ENCODE measurements at regions of chr3 and their contacts with region 1.

Region 1: DNA sequence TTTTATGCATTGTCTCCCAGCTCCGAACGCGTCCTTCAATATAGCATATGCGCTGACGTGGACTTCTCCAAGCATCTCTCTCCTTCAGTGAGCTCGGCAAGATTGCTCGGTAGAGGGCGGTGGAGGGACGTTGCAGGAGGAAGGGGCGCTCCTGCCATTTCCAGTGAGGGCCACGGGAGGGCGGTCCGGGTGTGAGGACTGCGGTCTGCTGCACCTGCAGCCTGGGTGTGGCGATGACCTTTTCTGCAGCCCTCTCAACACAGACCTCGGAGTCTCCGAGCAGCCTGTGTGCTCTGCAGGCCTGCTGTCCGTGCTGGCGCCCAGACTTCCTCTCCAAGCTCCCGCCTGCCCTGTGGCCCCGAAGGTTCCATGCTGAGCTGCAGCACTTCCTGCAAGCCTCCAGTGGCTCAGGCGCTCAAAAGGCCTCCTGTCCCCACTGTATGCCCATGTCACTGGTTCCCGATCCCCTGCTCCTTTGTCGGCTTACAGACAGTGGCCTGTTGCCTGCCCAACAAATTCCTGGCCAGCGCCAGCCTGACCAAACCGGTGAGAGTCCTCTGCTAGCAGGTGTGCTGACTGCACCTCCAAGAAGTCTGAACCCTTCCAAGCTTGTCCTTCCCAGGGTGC is 8.9 kb upstream of the RTP3 start:
- DNase-seq: peak; percentile 96
- ATAC-seq: peak; percentile 99
- H3K4me3 Mint-ChIP-seq: peak overlapping the region; percentile 47
- H3K27ac Mint-ChIP-seq: peak overlapping the region; percentile 17
- H3K4me1 Mint-ChIP-seq: peaks cover 30% of the 10 kb centered on the region
- H3K27me3 Mint-ChIP-seq: peaks cover 12% of the 10 kb centered on the region

Region 2: DNA sequence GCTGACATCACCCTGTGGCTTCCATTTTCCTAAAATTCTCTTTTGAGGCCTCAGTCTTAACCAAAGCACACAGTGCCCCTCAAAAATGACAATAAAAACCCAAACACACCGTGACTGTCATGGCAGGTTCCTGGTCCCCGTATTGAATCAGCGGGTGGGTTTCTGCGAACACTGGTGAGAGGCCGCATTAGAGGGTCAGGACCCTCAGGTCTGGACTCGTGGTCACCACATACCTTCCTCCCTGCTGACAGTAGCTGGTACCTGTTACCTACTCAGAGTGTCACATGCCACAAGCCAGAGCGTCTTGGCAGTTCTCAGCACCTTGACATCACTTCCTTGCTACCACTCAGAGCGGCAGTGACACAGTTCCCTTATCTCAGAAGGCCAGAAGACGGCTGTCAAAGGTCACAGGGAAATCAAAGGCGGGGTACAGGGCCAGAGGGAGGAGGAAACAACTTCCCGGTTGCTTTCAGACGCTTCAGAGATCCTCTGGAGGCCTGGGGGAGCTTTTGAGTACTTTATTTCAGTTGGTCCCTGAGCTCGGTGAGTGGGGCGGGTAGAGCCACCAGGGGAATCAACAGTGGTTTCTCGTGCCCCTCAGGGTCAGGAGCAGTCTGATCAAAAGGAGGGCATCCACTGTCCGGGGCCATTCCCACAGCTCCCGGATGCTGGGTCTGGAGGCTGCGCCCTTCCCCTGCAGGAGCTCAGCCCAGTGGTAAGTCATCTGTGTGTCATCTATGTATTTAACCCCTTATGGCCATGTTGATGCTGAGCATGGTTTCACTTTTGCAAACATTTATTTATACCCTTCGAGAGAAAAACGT is 81.8 kb before region 1 on chr3 and contains the starts of genes CCR5AS and CCRL2:
- CTCF ChIA-PET with region 1: interaction called, 17 read pairs
- POLR2A ChIA-PET with region 1: no interaction called
- DNase-seq: peak; percentile 79
- ATAC-seq: peak; percentile 87
- H3K4me3 Mint-ChIP-seq: peak within 1 kb of the TSS; percentile 87
- H3K27ac Mint-ChIP-seq: peak within 1 kb of the TSS; percentile 93
- H3K4me1 Mint-ChIP-seq: peaks cover 41% of the 10 kb centered on the region
- H3K27me3 Mint-ChIP-seq: peaks cover 10% of the 10 kb centered on the region
- total RNA-seq, gene CCRL2: 10.1 to 11.2 TPM

Region 3: GRCh38 chr3:46469680-46470357 is 19.0 kb before region 1 on chr3:
- CTCF ChIA-PET with region 1: interaction called, 69 read pairs
- POLR2A ChIA-PET with region 1: no interaction called
- DNase-seq: no peak
- ATAC-seq: no peak
- H3K4me3 Mint-ChIP-seq: no peak overlapping the region
- H3K27ac Mint-ChIP-seq: no peak overlapping the region
- H3K4me1 Mint-ChIP-seq: peaks cover 2% of the 10 kb centered on the region
- H3K27me3 Mint-ChIP-seq: peaks cover 44% of the 10 kb centered on the region

Region 4: DNA sequence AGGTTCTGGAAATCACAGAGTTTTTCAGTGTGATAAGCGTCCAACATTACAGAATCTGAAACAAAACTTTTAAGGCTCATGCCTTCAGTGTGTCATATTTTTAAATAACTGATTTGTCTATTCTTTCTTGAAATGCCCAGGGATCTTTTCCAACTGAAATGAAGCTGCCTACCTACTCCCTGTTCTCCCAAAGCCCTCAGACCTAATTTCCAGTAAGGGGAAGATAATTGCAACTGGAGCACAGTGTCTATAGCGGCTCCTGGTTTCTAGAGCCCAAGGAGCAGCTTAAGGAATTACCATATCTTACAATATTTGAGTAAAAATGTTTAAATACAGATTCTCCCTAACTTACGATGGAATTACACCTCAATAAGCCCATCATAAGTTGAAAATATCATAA is 44.2 kb after region 1 on chr3:
- CTCF ChIA-PET with region 1: interaction called, 138 read pairs
- POLR2A ChIA-PET with region 1: no interaction called
- DNase-seq: no peak
- ATAC-seq: no peak
- H3K4me3 Mint-ChIP-seq: no peak overlapping the region
- H3K27ac Mint-ChIP-seq: no peak overlapping the region
- H3K4me1 Mint-ChIP-seq: peaks cover 24% of the 10 kb centered on the region
- H3K27me3 Mint-ChIP-seq: peaks cover 30% of the 10 kb centered on the region

Region 5: GRCh38 chr3:46566036-46566641 is 77.3 kb after region 1 on chr3 and contains the start of gene LRRC2:
- CTCF ChIA-PET with region 1: interaction called, 223 read pairs
- POLR2A ChIA-PET with region 1: no interaction called
- DNase-seq: peak; percentile 57
- ATAC-seq: peak; percentile 83
- H3K4me3 Mint-ChIP-seq: peak within 1 kb of the TSS; percentile 47
- H3K27ac Mint-ChIP-seq: no peak within 1 kb of the TSS
- H3K4me1 Mint-ChIP-seq: peaks cover 17% of the 10 kb centered on the region
- H3K27me3 Mint-ChIP-seq: peaks cover 45% of the 10 kb centered on the region
- total RNA-seq, gene LRRC2: 0.11 TPM in 1 of 2 experiments, not detected in the other

Region 6: DNA sequence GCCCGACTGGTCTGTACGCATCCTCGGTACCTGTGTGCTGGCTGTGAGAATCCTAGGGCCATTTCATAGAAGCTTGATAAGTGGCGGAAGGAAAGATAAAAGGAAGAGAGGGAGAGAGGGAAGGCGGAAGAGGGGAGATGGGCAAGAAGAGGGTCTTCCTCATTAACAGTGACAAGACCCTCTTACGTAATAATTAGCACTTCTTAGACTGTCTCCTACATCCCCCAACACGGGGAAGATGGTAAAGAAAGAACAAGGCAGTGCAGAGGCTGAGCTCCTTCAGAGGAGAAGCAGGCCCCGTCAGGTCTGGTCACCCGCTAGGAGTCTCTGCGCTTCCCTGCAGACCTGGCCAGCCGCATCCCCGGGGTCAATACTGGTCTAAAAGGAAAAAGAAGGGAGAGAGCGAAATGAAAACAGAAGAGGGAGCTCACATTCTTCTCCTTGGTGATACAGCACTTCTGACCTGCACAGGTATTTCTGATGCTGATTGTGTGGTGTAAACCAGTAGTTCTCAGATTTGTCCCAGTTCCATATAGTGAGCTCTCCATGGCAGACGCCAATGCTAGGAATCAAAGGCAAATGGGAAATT is 104.5 kb after region 1 on chr3:
- CTCF ChIA-PET with region 1: interaction called, 31 read pairs
- POLR2A ChIA-PET with region 1: no interaction called
- DNase-seq: no peak
- ATAC-seq: no peak
- H3K4me3 Mint-ChIP-seq: no peak overlapping the region
- H3K27ac Mint-ChIP-seq: no peak overlapping the region
- H3K4me1 Mint-ChIP-seq: peaks cover 6% of the 10 kb centered on the region
- H3K27me3 Mint-ChIP-seq: peaks cover 21% of the 10 kb centered on the region